Activated naive CD4-positive, alpha-beta T cell treated with anti-CD3 and anti-CD28 coated beads for 36 hours (primary cell): ENCODE measurements at regions of chr19 and their contacts with region 1.

Region 1: GRCh38 chr19:29714953-29715700 is at the start of gene C19orf12:
- DNase-seq: peak; percentile 69
- H3K4me3 Mint-ChIP-seq: peak within 1 kb of the TSS; percentile 92
- H3K27ac Mint-ChIP-seq: peak within 1 kb of the TSS; percentile 97
- H3K4me1 Mint-ChIP-seq: peaks cover 47% of the 10 kb centered on the region
- H3K27me3 Mint-ChIP-seq: no peaks in the 10 kb centered on the region
- total RNA-seq, gene C19orf12: 21.6 to 24.3 TPM

Region 2: DNA sequence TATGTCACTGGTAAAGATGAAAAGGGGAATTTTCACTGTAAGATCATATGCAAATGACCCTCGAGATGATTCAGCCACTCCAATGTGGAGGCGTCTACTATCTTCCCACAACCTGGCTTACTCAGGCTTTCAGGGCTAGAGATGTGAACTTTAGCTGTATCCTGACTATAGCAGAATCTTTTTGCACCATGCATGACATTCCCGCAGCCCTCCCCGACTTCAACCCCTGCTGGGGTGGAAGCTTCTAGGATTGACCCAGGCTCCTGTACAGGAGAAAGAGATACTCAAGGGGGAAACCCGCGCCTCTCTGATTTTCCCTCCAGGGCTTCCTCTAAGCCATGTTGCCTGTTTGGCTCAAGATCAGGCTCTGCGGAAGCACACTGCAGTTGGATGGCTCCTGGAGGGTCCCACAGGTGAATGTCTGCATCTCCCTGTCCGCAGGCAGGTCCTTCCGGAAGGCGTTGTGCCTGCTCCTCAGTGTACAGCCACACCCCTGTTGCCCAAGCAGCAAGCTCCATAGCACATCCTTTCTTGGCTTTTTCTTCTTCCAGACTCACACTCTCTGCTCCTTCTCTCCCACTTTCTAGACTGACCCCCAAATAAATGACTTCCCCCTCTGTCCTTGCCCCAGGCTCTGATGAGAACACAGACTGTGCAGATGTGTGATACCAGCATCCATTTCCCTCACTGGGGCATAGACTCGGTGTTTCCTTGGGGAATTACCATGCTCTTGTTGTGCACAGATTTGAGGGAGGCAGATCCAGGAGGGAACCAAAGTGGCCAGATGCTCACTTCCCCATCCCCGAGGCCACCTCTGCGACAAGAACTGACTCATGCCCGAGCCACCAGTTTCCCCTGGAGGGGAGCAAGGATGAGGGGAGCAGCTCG is 138.1 kb before region 1 on chr19:
- CTCF ChIA-PET with region 1: interaction called, 3 read pairs
- intact Hi-C with region 1: loop called (anchors 1 kb)
- DNase-seq: peak; percentile 70
- H3K4me3 Mint-ChIP-seq: no peak overlapping the region
- H3K27ac Mint-ChIP-seq: no peak overlapping the region
- H3K4me1 Mint-ChIP-seq: peaks cover 24% of the 10 kb centered on the region
- H3K27me3 Mint-ChIP-seq: peaks cover 50% of the 10 kb centered on the region

Region 3: DNA sequence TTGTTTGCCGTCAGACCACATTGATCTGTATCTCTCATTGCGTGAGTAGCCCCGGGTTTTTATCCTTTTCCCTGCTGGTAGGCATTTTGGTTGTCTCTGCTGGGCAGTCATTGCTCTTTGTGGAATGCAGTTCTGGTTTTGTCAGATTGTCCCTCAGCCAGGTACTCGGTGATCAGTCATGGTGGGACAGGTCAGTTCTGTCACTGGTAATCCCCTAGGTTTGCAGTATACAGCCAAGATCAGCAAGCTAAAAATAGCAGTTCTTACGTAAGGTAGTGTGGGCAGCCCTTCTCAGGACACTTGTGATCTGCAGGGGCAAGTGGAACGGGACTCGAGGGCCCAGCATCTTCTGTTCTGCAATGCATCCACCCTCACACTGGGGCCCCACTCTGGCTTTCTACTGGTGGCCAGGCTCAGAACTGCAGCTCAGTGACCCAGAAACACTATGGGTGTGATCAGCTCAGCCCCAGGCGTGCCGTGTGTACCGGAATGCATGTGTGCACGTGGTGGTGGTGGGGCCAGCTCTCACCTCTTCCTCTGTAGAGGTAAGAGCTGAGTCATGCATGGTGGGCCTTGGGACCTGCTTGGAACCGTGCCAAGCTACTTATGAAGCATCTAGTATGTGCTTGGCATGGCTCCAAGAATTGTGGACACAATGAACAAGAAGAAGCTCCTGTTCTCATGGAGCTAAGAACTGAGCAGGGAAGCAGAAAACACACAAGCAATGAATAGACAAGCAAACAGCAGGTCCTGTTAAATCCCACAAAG is 43.5 kb before region 1 on chr19:
- CTCF ChIA-PET with region 1: interaction called, 96 read pairs
- intact Hi-C with region 1: loop called (anchors 1 kb)
- DNase-seq: peak; percentile 96
- H3K4me3 Mint-ChIP-seq: peak overlapping the region; percentile 69
- H3K27ac Mint-ChIP-seq: peak overlapping the region; percentile 96
- H3K4me1 Mint-ChIP-seq: peaks cover 91% of the 10 kb centered on the region
- H3K27me3 Mint-ChIP-seq: no peaks in the 10 kb centered on the region

Region 4: DNA sequence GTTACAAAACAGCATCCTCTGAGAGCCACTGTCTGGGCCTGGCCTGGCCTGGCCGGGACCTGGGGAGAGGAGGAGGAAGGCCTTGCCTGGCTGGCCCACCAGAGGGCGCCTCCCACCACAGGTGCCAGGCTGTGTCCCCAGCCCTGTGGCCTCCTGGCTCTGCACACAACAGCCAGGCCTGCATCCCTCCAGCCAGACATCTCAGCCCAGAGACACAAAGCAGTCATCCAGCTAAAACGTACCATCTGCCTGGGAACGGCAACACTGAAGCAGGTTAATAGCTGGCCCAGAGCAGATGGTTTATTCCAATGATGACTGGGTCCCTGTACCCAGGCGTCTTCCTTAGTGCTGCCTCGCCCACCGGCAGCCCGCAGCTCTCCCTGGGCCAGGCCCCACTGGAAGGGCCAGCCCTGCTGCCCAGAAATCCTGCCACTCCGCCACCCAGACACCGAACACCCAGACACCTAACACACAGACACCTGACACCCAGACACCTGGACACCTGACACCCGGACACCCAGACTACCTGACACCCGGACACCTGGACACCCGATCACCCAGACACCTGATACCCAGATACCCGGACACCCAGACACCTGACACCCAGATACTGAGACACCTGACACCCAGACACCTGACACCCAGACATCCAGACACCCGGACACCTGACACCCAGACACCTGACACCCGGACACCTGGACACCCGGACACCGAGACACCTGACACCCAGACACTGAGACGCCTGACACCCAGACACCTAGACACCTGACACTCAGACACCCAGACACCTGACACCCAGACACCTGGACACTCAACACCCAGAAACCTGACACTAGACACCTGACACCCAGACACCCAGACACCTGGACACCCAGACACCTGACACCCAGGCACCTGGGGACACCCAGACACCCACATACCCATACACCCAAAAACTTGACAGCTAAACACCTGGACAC is 20.2 kb before region 1 on chr19:
- CTCF ChIA-PET with region 1: interaction called, 145 read pairs
- intact Hi-C with region 1: loop called (anchors 1 kb)
- DNase-seq: peak; percentile 88
- H3K4me3 Mint-ChIP-seq: no peak overlapping the region
- H3K27ac Mint-ChIP-seq: no peak overlapping the region
- H3K4me1 Mint-ChIP-seq: peaks cover 11% of the 10 kb centered on the region
- H3K27me3 Mint-ChIP-seq: no peaks in the 10 kb centered on the region

Region 5: GRCh38 chr19:29737461-29738000 is 22.4 kb after region 1 on chr19:
- CTCF ChIA-PET with region 1: no interaction called
- intact Hi-C with region 1: no loop called
- DNase-seq: no peak
- H3K4me3 Mint-ChIP-seq: no peak overlapping the region
- H3K27ac Mint-ChIP-seq: no peak overlapping the region
- H3K4me1 Mint-ChIP-seq: no peaks in the 10 kb centered on the region
- H3K27me3 Mint-ChIP-seq: no peaks in the 10 kb centered on the region

Region 6: DNA sequence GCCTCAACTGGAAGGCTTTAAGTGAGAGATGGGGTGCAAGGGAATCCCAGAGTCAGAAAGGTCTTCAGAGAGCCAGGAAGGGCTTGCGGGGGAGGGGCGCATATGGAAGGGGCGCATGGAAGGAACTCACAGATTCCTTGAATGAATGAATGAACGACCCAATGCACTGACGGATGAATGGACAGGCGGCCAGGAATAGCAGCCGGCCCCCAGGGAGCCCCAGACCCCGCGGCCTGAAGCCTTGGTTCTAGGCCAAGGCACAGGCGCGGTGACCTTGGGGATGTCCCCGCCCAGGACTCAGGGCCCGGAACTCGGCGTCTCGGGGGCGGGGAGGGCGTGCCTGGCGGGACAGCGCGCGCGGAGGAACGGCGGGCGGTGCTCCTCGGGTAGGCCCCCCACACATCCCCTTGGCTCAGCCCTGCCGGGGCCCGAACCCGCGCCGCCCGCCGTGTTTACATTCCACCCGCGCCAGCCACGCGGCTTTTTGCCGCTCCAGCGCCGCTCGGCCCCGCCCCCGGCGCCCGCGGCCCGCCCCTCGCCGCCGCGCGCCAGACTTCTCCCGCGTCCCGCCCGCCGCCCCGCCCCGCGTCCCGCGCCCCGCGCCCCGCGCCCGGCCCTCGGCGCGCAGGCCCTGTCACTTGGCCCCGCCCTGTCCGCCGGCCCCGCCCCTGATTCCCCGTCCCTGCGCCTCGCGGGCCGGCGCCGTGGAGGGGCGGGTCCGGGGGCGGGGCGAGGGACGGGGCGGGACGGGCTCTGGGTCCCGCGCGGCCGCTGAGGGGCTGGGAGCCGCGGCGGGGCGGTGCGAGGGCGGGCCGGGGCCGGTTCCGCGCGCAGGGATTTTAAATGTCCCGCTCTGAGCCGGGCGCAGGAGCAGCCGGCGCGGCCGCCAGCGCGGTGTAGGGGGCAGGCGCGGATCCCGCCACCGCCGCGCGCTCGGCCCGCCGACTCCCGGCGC is 96.3 kb after region 1 on chr19 and contains the start of gene CCNE1:
- CTCF ChIA-PET with region 1: interaction called, 4 read pairs
- intact Hi-C with region 1: loop called (anchors 1 kb)
- DNase-seq: peak; percentile 97
- H3K4me3 Mint-ChIP-seq: peak within 1 kb of the TSS; percentile 84
- H3K27ac Mint-ChIP-seq: peak within 1 kb of the TSS; percentile 88
- H3K4me1 Mint-ChIP-seq: peaks cover 11% of the 10 kb centered on the region
- H3K27me3 Mint-ChIP-seq: no peaks in the 10 kb centered on the region
- total RNA-seq, gene CCNE1: 31.2 to 34.1 TPM

Region 7: DNA sequence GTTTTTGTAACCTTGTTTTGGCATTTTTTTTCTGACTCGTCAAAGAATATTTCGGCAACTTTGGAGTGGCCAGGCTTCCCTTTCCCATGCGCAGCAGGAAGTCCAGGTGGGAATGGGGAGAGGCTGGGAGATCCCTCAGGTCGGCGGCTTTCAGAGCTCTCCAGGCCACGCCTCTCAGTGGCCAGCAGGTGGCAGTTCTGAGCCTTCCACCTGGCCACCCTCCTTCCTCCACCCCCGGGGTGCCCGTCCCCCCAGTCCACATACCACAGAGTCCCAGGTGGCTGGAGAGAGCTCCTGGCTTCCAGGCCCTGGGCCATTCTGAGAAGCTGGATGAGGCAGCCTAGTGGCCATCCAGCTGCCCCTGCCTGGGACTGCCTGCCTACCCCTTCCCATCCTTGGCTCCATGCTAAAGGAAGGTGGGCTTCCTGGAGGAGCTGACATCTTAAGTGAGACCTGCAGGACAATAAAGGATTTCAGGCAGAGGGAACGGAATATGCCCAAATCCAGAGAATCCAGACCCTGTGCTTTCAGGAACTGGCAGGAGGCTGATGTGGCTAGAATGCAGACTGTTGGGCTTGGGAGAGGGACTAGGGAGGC is 143.0 kb after region 1 on chr19:
- CTCF ChIA-PET with region 1: interaction called, 10 read pairs
- intact Hi-C with region 1: no loop called
- DNase-seq: peak; percentile 58
- H3K4me3 Mint-ChIP-seq: no peak overlapping the region
- H3K27ac Mint-ChIP-seq: no peak overlapping the region
- H3K4me1 Mint-ChIP-seq: peaks cover 3% of the 10 kb centered on the region
- H3K27me3 Mint-ChIP-seq: no peaks in the 10 kb centered on the region